PC-9 (cell line): ENCODE measurements at regions of chrX and their contacts with region 1.

Region 1: GRCh38 chrX:120790118-120790517 is 85.5 kb downstream of the CT47B1 start:
- DNase-seq: peak; percentile 23 to 59
- H3K4me3 ChIP-seq: no peak overlapping the region
- H3K27ac ChIP-seq: no peak overlapping the region
- H3K4me1 ChIP-seq: peaks cover 25% of the 10 kb centered on the region
- H3K27me3 ChIP-seq: no peaks in the 10 kb centered on the region
- CTCF ChIP-seq: peak; percentile 87

Region 2: GRCh38 chrX:120603707-120604360 is 186.3 kb before region 1 on chrX and contains the start of gene MCTS1:
- CTCF ChIA-PET with region 1: no interaction called
- POLR2A ChIA-PET with region 1: no interaction called
- intact Hi-C with region 1: no loop called
- DNase-seq: peak; percentile 85 to 98
- H3K4me3 ChIP-seq: peak within 1 kb of the TSS; percentile 61
- H3K27ac ChIP-seq: peak within 1 kb of the TSS; percentile 86
- H3K4me1 ChIP-seq: peaks cover 22% of the 10 kb centered on the region
- H3K27me3 ChIP-seq: no peaks in the 10 kb centered on the region
- CTCF ChIP-seq: no peak
- total RNA-seq, gene MCTS1: 90.7 and 98.4 TPM in 2 replicates

Region 3: GRCh38 chrX:120746153-120746552 is 44.0 kb before region 1 on chrX:
- CTCF ChIA-PET with region 1: interaction called, 15 read pairs
- POLR2A ChIA-PET with region 1: no interaction called
- intact Hi-C with region 1: no loop called
- DNase-seq: no peak
- H3K4me3 ChIP-seq: no peak overlapping the region
- H3K27ac ChIP-seq: no peak overlapping the region
- H3K4me1 ChIP-seq: peaks cover 39% of the 10 kb centered on the region
- H3K27me3 ChIP-seq: no peaks in the 10 kb centered on the region
- CTCF ChIP-seq: no peak

Region 4: DNA sequence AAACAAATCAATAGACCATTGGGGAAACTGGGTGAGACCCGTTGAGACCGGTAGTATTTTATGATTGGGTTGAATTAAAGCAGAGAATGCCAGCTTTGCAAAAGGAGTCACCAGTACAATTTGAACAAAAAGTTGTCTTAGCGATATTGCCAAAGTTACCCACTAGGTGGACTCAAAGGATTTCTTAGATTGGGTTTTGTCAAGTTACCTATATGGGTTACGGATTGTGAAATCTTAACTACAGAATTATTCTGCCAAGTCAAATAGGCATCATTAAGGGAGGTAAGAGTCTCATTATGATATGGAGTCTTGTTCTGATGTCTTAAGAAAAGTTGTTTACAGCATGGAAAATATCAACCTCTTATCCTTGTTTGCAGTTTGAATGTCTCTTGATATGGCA is 210.5 kb after region 1 on chrX:
- CTCF ChIA-PET with region 1: no interaction called
- POLR2A ChIA-PET with region 1: no interaction called
- intact Hi-C with region 1: no loop called
- DNase-seq: peak in 1 of 2 experiments; percentile 45
- H3K4me3 ChIP-seq: no peak overlapping the region
- H3K27ac ChIP-seq: no peak overlapping the region
- H3K4me1 ChIP-seq: no peaks in the 10 kb centered on the region
- H3K27me3 ChIP-seq: no peaks in the 10 kb centered on the region
- CTCF ChIP-seq: peak; percentile 59

Region 5: DNA sequence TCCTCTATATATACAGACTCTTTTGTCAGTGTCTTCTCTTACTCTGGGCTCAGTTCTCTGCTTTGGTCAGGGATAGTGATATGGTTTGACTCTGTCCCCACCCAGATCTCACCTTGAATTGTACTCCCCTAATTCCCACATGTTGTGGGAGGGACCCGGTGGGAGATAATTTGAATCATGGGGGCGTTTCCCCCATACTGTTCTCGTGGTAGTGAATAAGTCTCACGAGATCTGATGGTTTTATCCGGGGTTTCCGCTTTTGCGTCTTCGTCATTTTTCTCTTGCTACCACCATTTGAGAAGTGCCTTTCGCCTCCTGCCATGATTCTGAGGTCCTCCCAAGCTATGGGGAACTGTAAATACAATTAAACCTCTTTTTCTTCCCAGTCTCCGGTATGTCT is 401.7 kb after region 1 on chrX:
- CTCF ChIA-PET with region 1: no interaction called
- POLR2A ChIA-PET with region 1: no interaction called
- intact Hi-C with region 1: loop called (anchors 10 kb)
- DNase-seq: peak in 1 of 2 experiments; percentile 48
- H3K4me3 ChIP-seq: no peak overlapping the region
- H3K27ac ChIP-seq: no peak overlapping the region
- H3K4me1 ChIP-seq: no peaks in the 10 kb centered on the region
- H3K27me3 ChIP-seq: no peaks in the 10 kb centered on the region
- CTCF ChIP-seq: no peak